Endothelial cell of umbilical vein (primary cell): ENCODE measurements at regions of chr1 and their contacts with region 1.

Region 1: DNA sequence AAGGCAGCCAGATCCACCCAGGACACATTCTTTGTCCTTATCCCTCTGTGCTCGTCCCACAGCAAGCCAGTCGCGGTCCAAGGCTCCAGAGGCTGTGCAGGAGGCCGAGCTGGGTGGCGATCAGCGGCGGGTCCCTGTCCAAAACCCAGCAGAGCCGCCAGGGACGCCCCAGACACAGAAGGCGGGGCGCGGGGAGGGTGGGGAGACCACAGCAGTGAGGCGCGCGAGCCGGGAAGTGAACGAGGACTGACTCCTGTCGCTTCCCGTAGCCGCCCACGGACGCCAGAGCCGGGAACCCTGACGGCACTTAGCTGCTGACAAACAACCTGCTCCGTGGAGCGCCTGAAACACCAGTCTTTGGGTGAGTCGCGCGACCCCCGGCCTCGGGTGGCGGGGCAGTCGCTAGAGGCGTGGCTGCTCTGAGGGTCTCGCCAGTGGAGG is at the start of gene LGALS8:
- DNase-seq: peak; percentile 83
- H3K4me3 ChIP-seq: peak within 1 kb of the TSS; percentile 83 to 95 (median 83)
- H3K27ac ChIP-seq: peak within 1 kb of the TSS; percentile 72
- H3K4me1 ChIP-seq: no peaks in the 10 kb centered on the region
- H3K27me3 ChIP-seq: no peaks in the 10 kb centered on the region
- CTCF ChIP-seq: no peak
- POLR2A ChIP-seq: peak; percentile 5
- total RNA-seq, gene LGALS8: 48.1 and 49.9 TPM in 2 replicates

Region 2: DNA sequence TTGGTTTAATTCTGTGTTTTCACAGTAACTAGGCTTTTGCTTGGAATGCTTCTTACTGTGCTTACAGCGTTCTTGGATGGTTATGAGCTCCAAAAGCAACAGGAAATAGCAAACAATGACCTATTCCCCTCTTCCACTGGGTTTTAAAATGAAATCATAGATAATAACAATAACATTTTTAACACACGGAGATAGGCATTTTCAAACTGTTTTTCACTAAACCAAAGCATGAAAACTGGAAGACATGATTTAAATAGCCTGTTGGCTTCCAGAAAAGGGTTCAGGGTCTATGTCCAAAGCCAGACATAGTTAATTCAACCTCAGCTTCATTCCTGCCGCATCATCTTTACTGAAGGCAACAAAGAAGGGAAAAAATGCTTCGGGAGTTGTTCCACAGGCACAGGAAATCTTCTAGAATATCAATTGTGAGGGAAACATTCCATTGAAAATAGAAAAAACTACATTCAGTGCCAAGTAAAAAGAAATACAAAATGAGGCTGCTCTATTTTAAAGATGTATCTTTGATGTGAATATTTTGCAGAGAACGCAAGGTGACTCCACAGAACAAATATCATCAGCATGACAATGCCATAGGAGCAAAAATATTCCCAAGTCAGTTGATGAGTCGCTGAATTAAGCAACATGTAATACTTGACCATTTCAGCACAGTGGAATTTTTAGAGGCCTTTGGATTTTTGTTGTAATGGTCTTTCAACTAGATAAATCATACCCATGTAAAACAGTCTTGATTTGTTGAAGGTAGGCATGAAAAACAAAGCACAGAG is 539.5 kb before region 1 on chr1:
- CTCF ChIA-PET with region 1: no interaction called
- POLR2A ChIA-PET with region 1: no interaction called
- dilution Hi-C with region 1: no loop called
- intact Hi-C with region 1: loop called (anchors 10 kb)
- DNase-seq: peak; percentile 92
- H3K4me3 ChIP-seq: peak overlapping the region in 1 of 3 experiments; percentile 29
- H3K27ac ChIP-seq: peak overlapping the region; percentile 96
- H3K4me1 ChIP-seq: peaks cover 47% of the 10 kb centered on the region
- H3K27me3 ChIP-seq: no peaks in the 10 kb centered on the region
- CTCF ChIP-seq: no peak
- POLR2A ChIP-seq: no peak

Region 3: GRCh38 chr1:236103646-236104218 is 420.0 kb before region 1 on chr1:
- CTCF ChIA-PET with region 1: interaction called, 3 read pairs
- POLR2A ChIA-PET with region 1: interaction called, 10 read pairs
- dilution Hi-C with region 1: no loop called
- intact Hi-C with region 1: no loop called
- DNase-seq: peak; percentile 73
- H3K4me3 ChIP-seq: no peak overlapping the region
- H3K27ac ChIP-seq: no peak overlapping the region
- H3K4me1 ChIP-seq: no peaks in the 10 kb centered on the region
- H3K27me3 ChIP-seq: no peaks in the 10 kb centered on the region
- CTCF ChIP-seq: peak; percentile 56 to 60
- POLR2A ChIP-seq: no peak

Region 4: DNA sequence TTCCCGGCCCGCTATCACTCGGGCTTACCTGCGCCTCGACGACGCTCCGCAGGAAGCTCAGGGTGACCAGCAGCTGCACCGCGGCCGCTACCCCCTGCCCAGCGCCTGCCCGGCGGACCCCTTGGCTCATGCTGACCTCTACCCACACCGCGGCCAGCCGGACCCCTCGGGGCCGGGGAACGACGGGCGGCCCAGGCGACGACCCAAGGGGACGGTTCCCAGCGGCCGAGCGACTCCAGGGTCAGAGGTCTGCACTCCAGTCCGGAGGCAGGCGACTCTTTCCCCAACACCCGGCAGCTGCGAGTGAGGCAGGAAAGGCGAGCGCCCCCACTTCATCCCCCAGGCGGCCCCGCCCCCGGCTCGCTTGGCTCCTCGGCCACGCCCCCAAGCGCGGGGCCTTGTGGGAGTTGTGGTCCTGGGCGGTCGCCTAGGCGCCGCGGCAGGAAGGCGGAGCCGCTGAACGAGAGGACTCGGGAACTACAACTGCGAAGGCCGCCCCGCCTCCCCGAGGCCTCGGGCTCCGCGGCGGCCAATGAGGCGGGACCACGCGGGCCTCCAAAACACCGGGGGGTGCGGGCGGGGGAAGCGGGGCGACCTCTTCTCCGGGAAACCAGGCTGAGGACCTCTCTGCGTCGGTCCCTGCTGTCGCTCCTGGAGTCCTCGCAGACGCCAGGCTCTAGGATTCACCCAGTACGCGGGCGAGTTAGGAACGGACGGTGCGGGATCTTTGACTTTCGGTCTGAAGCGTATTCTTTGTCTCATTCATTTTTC is 241.9 kb before region 1 on chr1 and contains the start of gene ERO1B:
- CTCF ChIA-PET with region 1: no interaction called
- POLR2A ChIA-PET with region 1: no interaction called
- dilution Hi-C with region 1: no loop called
- intact Hi-C with region 1: loop called (anchors 5 kb)
- DNase-seq: peak; percentile 95
- H3K4me3 ChIP-seq: peak within 1 kb of the TSS; percentile 39 to 99 (median 65)
- H3K27ac ChIP-seq: no peak within 1 kb of the TSS
- H3K4me1 ChIP-seq: peaks cover 3% of the 10 kb centered on the region
- H3K27me3 ChIP-seq: peaks cover 16 to 22% of the 10 kb centered on the region in 2 experiments
- CTCF ChIP-seq: peak in 1 of 2 donors; percentile 2
- POLR2A ChIP-seq: peak; percentile 21
- total RNA-seq, gene ERO1B: 3.6 and 5.1 TPM in 2 replicates

Region 5: DNA sequence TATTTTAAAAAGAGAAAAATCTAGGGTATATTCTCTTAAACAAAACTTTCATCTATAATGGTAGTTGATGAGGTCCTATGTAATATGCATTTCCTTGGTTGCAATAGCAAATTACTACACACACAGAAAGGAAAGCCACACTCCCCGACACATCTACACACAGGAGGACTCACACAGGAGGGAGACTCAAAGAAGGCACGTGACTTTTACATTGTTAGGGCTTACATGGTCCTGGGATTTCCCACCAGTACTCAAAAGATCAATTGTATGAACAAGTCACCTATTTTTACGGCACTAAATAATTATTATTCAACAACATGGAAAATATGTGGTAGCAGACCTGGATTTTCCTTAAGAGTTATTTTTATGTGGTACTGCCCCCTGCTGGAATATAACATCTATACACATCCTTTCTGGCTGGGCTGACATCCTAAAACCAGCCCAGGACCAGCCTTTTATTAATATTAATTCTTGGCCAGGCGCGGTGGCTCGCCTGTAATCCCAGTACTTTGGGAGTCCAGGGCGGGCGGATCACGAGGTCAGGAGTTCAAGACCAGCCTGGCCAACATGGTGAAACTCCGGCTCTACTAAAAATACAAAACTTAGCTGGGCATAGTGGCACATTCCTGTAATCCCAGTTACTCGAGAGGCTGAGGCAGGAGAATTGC is 33.9 kb before region 1 on chr1:
- CTCF ChIA-PET with region 1: no interaction called
- POLR2A ChIA-PET with region 1: no interaction called
- dilution Hi-C with region 1: no loop called
- intact Hi-C with region 1: loop called (anchors 2 kb)
- DNase-seq: peak; percentile 37
- H3K4me3 ChIP-seq: no peak overlapping the region
- H3K27ac ChIP-seq: no peak overlapping the region
- H3K4me1 ChIP-seq: no peaks in the 10 kb centered on the region
- H3K27me3 ChIP-seq: no peaks in the 10 kb centered on the region
- CTCF ChIP-seq: peak; percentile 33 to 46
- POLR2A ChIP-seq: no peak

Region 6: GRCh38 chr1:236502885-236503639 is 20.7 kb before region 1 on chr1:
- CTCF ChIA-PET with region 1: interaction called, 4 read pairs
- POLR2A ChIA-PET with region 1: interaction called, 4 read pairs
- dilution Hi-C with region 1: no loop called
- intact Hi-C with region 1: loop called (anchors 1 kb)
- DNase-seq: peak; percentile 89
- H3K4me3 ChIP-seq: peak overlapping the region in 1 of 3 experiments; percentile 4
- H3K27ac ChIP-seq: peak overlapping the region; percentile 1
- H3K4me1 ChIP-seq: peaks cover 10% of the 10 kb centered on the region
- H3K27me3 ChIP-seq: no peaks in the 10 kb centered on the region
- CTCF ChIP-seq: no peak
- POLR2A ChIP-seq: peak; percentile 48

Region 7: DNA sequence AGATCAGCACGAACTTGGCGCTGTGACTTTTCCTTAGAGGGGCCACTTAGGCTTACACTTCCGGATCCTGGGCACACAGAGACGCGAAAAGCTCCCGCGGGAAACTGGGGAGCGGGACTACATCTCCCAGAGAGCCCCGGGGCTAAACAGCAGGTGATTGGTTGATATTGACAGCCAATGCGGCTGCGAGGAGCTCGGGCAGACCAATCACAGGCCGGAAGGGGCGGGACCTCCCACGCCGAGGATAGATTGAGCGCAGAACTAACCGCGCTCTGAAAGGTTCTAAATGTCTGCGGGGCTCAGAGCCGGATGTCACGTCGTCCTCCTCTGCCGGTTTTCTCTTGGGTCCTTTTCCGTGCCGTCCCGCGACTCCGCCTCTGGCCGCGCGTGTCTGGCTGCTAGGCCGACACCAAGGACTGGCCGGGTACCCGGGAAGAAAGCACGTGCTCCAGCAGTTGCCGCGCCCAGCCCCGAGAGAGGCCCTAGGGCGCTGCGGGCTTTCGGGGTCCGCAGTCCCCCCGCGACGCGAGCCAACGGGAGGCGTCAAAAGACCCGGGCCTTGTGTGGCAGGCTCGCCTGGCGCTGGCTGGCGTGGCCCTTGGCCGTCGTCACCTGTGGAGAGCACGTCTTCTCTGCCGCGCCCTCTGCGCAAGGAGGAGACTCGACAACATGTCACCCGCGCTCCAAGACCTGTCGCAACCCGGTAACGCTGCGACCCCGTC is 271.5 kb after region 1 on chr1 and contains the start of gene MTR:
- CTCF ChIA-PET with region 1: no interaction called
- POLR2A ChIA-PET with region 1: no interaction called
- dilution Hi-C with region 1: no loop called
- intact Hi-C with region 1: loop called (anchors 1 kb)
- DNase-seq: peak; percentile 98
- H3K4me3 ChIP-seq: peak within 1 kb of the TSS; percentile 50 to 92 (median 85)
- H3K27ac ChIP-seq: peak within 1 kb of the TSS; percentile 39
- H3K4me1 ChIP-seq: peaks cover 11% of the 10 kb centered on the region
- H3K27me3 ChIP-seq: no peaks in the 10 kb centered on the region
- CTCF ChIP-seq: no peak
- POLR2A ChIP-seq: peak; percentile 89
- total RNA-seq, gene MTR: 41.8 and 45.2 TPM in 2 replicates